Gastrocnemius medialis (tissue), 4 donors: ENCODE measurements at regions of chr11 and their contacts with region 1.

Region 1: DNA sequence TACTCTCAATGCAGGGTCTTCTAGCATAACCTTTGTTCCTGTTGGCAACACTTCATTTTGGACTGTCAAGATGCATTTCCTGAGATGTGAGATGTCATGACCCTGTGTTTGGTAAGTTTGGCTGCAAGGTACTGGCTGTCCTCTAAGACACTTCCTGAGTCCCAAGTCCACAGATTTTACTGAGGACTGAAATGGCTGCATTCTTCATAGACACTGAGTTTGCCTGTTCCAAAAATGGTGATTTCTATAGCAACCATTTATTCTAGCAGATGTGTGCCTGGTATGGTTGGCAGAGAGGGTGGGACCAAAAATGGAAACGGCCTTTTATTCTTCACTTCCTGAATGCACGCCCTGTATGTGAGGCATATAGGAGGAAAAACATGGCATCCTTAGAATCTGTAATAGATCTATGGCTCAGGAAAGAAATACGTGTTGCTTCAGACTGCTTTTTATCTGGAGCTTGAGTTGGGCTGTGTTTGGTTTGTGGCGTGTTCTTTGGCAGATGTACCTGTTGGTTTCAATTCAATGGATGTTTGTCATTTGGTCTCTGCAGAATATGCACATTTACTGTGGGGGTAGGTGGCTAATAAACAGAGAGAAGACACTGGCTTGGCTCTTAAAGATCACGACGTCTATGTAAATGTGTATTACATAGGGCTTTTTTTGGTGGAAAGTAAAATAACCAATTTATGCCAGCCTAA is 62.4 kb downstream of the ZBTB16 start:
- DNase-seq: peak in 1 of 2 donors; percentile 14
- ATAC-seq: no peak
- H3K4me3 ChIP-seq: peak overlapping the region in 1 of 4 donors; percentile 12
- H3K27ac ChIP-seq: peak overlapping the region; percentile 94 to 99 (median 96)
- H3K4me1 ChIP-seq: peaks cover 96% of the 10 kb centered on the region in 2 donors
- H3K27me3 ChIP-seq: no peaks in the 10 kb centered on the region
- CTCF ChIP-seq: no peak
- POLR2A ChIP-seq: no peak

Region 2: GRCh38 chr11:114073828-114074381 is 48.0 kb before region 1 on chr11:
- in situ Hi-C with region 1: no loop called
- intact Hi-C with region 1: loop called (anchors 2 kb)
- DNase-seq: peak in 1 of 2 donors; percentile 46
- ATAC-seq: no peak
- H3K4me3 ChIP-seq: peak overlapping the region; percentile 46 to 54 (median 50)
- H3K27ac ChIP-seq: peak overlapping the region; percentile 94 to 99 (median 96)
- H3K4me1 ChIP-seq: peaks cover 82 to 96% of the 10 kb centered on the region in 2 donors
- H3K27me3 ChIP-seq: no peaks in the 10 kb centered on the region
- CTCF ChIP-seq: no peak
- POLR2A ChIP-seq: peak in 1 of 2 donors; percentile 53

Region 3: GRCh38 chr11:114080219-114080618 is 41.7 kb before region 1 on chr11:
- in situ Hi-C with region 1: no loop called
- intact Hi-C with region 1: loop called (anchors 2 kb)
- DNase-seq: peak; percentile 75 to 78
- ATAC-seq: peak; percentile 63 to 72
- H3K4me3 ChIP-seq: peak overlapping the region in 3 of 4 donors; percentile 48 to 54 (median 50)
- H3K27ac ChIP-seq: peak overlapping the region; percentile 94 to 99 (median 96)
- H3K4me1 ChIP-seq: peaks cover 100% of the 10 kb centered on the region in 2 donors
- H3K27me3 ChIP-seq: no peaks in the 10 kb centered on the region
- CTCF ChIP-seq: no peak
- POLR2A ChIP-seq: peak; percentile 73 to 83

Region 4: DNA sequence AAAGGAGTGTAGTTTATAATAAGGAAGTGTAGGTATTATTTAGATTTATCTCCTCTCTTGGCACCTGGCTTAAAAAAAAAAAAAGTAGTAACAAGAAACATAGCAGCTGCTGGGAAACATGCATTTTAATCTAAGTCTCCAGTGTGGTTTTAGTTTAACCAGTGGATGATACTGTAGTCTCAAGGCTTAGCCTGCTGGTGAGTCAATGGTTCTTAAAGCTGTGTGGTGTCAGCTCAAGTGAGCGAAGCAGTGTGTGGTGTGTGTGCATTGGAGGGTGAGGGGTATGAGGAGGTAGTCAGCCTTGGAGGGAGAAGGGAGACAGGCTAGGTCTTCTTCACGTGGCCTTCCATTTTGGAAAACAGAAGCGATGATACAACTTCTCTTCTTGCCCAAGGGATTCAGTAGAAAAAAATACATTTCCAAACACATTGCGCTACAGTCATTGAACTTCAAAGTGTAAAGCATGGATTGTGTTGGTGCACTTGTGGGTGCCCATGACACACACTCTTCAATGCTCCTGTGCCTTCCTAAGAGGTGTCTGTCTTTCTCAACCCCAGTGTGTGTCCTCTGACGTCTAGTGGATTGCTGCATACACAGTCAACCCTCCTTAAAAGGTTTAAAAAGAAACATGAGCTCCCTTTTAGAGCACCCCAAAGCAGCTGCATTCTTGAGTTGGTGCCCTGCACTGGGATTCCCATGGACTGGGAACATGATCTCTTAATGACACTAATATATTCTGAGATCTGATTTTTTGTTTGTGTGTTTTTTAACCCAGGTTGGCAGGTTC is 22.4 kb before region 1 on chr11:
- in situ Hi-C with region 1: no loop called
- intact Hi-C with region 1: loop called (anchors 1 kb)
- DNase-seq: peak; percentile 53 to 80
- ATAC-seq: peak; percentile 48 to 81
- H3K4me3 ChIP-seq: peak overlapping the region; percentile 11 to 43 (median 24)
- H3K27ac ChIP-seq: peak overlapping the region; percentile 94 to 99 (median 96)
- H3K4me1 ChIP-seq: peaks cover 97 to 98% of the 10 kb centered on the region in 2 donors
- H3K27me3 ChIP-seq: no peaks in the 10 kb centered on the region
- CTCF ChIP-seq: no peak
- POLR2A ChIP-seq: peak; percentile 24 to 69

Region 5: GRCh38 chr11:114153224-114153623 is 31.3 kb after region 1 on chr11:
- in situ Hi-C with region 1: no loop called
- intact Hi-C with region 1: loop called (anchors 1 kb)
- DNase-seq: peak in 1 of 2 donors; percentile 79
- ATAC-seq: peak; percentile 8 to 24
- H3K4me3 ChIP-seq: no peak overlapping the region
- H3K27ac ChIP-seq: peak overlapping the region; percentile 94 to 99 (median 96)
- H3K4me1 ChIP-seq: peaks cover 94 to 97% of the 10 kb centered on the region in 2 donors
- H3K27me3 ChIP-seq: no peaks in the 10 kb centered on the region
- CTCF ChIP-seq: no peak
- POLR2A ChIP-seq: no peak

Region 6: DNA sequence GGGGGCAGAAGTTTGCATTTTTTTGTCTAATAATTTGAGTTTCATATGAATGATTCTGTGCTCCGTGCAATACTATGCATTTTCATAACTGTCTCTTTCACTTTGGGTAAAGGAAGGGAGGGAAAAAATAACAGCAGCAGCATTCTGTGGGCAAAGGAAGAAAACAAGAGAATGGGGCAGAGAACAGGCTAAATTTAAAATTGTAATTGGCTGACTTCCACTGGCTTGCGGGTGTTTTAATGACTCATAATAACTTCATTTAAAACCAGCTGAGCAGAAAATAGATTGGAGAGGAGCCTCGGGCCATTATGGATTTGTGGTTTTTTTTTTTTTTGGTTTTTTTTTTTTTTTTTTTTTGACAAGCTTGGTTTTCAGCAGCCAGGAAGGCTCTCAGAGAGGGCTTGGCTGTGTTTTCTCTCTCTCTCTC is 45.0 kb after region 1 on chr11:
- in situ Hi-C with region 1: no loop called
- intact Hi-C with region 1: no loop called
- DNase-seq: peak in 1 of 2 donors; percentile 49
- ATAC-seq: peak in 1 of 2 donors; percentile 10
- H3K4me3 ChIP-seq: peak overlapping the region; percentile 7 to 62 (median 48)
- H3K27ac ChIP-seq: peak overlapping the region; percentile 94 to 99 (median 96)
- H3K4me1 ChIP-seq: peaks cover 89 to 94% of the 10 kb centered on the region in 2 donors
- H3K27me3 ChIP-seq: no peaks in the 10 kb centered on the region
- CTCF ChIP-seq: no peak
- POLR2A ChIP-seq: no peak